CD14-positive monocyte (primary cell): ENCODE measurements at regions of chr17 and their contacts with region 1.

Region 1: DNA sequence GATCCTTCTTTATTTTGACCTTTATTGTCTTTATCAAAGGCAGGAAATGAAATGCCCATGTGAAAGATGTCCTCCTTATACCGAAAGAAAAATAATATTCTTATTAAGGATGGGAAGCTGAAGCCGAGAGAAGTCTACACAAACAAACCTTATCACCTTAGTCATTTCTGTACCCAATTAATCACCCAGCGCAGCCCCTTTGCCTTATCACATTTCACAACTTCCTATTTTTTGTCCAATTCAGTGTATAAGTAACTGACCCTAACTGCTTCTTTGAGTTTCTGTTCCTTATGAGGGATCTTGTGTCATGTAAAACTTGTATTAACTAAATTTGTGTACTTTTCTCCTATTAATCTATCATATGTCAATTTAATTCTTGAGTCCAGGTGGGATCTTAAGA is 16.4 kb upstream of the CCL23 start:
- DNase-seq: peak; percentile 69 to 83 (median 74)
- H3K4me3 ChIP-seq: no peak overlapping the region
- H3K4me3 Mint-ChIP-seq: peak overlapping the region in 1 of 2 donors; percentile 49
- H3K27ac ChIP-seq: peak overlapping the region in 1 of 2 donors; percentile 1
- H3K27ac Mint-ChIP-seq: peak overlapping the region in 6 of 7 donors; percentile 7 to 47 (median 17)
- H3K4me1 ChIP-seq: peaks cover 36 to 51% of the 10 kb centered on the region in 2 donors
- H3K4me1 Mint-ChIP-seq: peaks cover 48% of the 10 kb centered on the region
- H3K27me3 ChIP-seq: no peaks in the 10 kb centered on the region
- H3K27me3 Mint-ChIP-seq: peaks cover 0 to 2% (median 2%) of the 10 kb centered on the region in 3 donors
- CTCF ChIP-seq: no peak

Region 2: DNA sequence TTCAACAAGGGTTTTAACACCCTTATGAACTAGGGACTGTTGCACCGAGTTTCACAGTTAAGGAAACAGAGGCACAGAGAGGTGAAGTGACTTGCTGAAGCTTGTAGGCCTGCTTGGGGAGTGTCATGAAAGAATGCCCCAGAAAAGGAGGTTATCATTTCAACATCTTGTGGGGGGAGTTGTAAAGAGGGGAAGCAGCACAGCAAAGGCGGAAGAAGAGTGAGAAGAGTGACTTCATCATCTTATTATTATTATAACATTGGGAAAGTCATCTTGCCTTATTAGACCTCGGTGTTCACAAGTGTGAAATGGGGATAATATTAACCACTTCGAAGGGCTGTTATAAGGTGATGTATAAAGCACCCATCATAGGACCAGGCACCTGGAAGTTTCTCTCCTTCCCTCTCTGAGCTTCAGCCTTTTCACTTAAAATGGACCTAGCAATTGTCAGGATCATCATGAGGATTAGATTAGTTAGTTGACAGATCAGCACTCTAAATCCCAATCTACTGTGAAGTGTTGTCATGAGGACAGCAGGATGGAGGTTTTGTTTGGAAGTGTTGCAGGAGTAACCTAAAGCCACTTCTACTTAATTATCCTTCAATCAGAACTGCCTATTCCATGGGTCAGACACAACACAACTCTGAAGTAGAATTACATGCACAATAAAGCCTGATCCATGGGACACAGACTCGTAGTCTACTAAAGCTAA is 71.8 kb after region 1 on chr17:
- intact Hi-C with region 1: no loop called
- DNase-seq: peak; percentile 38 to 79 (median 63)
- H3K4me3 ChIP-seq: peak overlapping the region in 1 of 3 experiments; percentile 8
- H3K4me3 Mint-ChIP-seq: peak overlapping the region in 1 of 2 donors; percentile 13
- H3K27ac ChIP-seq: peak overlapping the region in 1 of 2 donors; percentile 9
- H3K27ac Mint-ChIP-seq: peak overlapping the region; percentile 55 to 96 (median 85)
- H3K4me1 ChIP-seq: peaks cover 67% of the 10 kb centered on the region in 2 donors
- H3K4me1 Mint-ChIP-seq: peaks cover 63% of the 10 kb centered on the region
- H3K27me3 ChIP-seq: no peaks in the 10 kb centered on the region
- H3K27me3 Mint-ChIP-seq: peaks cover 0 to 6% (median 1%) of the 10 kb centered on the region in 3 donors
- CTCF ChIP-seq: no peak

Region 3: DNA sequence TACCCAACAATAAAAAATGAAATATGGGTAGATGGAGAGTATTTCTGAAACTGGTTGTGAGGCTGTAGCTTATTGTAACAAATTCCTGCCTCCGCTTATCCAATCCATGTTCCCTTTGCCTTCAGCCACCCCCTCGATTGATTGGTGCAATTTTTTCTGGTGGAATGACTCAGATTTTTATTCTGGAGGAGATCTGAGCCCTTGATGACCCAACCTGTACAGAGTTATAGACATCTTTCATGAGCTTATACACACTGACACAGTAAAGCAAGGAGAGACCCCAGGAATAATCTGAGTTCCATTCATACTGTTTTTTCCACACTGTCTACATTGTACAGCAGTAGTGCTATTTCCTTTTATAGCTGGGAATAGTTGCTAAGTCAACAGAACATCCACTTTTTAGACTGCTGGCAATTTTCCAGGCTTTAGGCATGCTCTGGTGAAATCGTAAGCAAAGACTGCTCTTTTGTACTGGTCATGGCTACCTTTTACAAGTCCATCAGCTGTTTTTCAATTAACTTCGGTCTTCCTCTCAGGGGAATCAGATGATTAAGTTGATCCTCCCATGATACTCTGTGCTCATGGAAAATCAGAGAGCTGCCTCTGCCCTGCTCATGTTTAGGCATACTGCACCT is 99.6 kb after region 1 on chr17:
- intact Hi-C with region 1: loop called in 1 of 2 experiments (anchors 5 kb)
- DNase-seq: peak in 2 of 3 donors; percentile 21 to 25
- H3K4me3 ChIP-seq: no peak overlapping the region
- H3K4me3 Mint-ChIP-seq: no peak overlapping the region
- H3K27ac ChIP-seq: no peak overlapping the region
- H3K27ac Mint-ChIP-seq: no peak overlapping the region
- H3K4me1 ChIP-seq: peaks cover 15 to 23% of the 10 kb centered on the region in 2 donors
- H3K4me1 Mint-ChIP-seq: peaks cover 36% of the 10 kb centered on the region
- H3K27me3 ChIP-seq: no peaks in the 10 kb centered on the region
- H3K27me3 Mint-ChIP-seq: peaks cover 0 to 4% (median 0%) of the 10 kb centered on the region in 3 donors
- CTCF ChIP-seq: no peak